Thyroid gland (tissue), 4 donors: ENCODE measurements at regions of chr9 and their contacts with region 1.

Region 1: GRCh38 chr9:93682232-93682968 is 106.0 kb downstream of the PHF2 start:
- DNase-seq: peak; percentile 51 to 58
- H3K4me3 ChIP-seq: no peak overlapping the region
- H3K27ac ChIP-seq: no peak overlapping the region
- H3K4me1 ChIP-seq: no peaks in the 10 kb centered on the region
- H3K27me3 ChIP-seq: no peaks in the 10 kb centered on the region
- CTCF ChIP-seq: peak in 5 of 6 experiments; percentile 65 to 82 (median 67)
- POLR2A ChIP-seq: no peak

Region 2: DNA sequence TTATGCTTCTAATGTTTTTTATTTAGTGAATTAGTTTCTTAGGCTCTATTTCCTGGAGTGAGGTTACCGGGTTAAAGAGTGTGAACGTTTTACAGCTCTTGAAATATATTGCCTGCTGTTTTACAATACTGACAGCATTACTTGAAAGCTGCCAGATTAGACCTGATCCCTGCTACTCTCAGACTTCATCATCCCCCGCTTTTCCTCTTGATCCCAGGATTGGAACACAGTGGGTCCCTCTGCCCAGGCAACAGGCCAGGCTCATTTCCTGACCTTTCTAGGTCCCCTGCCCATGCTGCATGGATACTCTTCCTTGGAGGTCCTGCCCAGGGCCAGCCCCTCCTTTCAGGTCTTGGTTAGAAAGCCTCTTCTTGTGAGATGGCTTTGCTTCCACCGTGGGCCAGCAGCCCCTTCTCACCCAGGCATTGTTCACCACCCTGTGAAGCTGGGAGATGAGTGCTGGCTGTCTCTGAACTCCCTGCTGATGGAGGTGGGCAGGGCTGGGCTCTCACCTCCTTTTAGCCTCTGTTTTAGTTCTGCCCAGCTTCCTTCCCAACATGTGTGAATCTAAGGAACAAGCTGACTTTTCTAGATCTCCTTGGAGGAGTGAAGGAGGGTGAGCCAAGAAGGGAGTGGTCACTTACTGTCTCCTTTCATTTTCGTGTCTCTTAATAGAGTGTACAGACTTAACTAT is 213.5 kb before region 1 on chr9:
- intact Hi-C with region 1: no loop called
- DNase-seq: no peak
- H3K4me3 ChIP-seq: no peak overlapping the region
- H3K27ac ChIP-seq: peak overlapping the region in 2 of 3 donors; percentile 14 to 41
- H3K4me1 ChIP-seq: peaks cover 43 to 66% of the 10 kb centered on the region in 2 donors
- H3K27me3 ChIP-seq: no peaks in the 10 kb centered on the region
- CTCF ChIP-seq: no peak
- POLR2A ChIP-seq: no peak

Region 3: GRCh38 chr9:93531374-93531773 is 151.0 kb before region 1 on chr9:
- intact Hi-C with region 1: no loop called
- DNase-seq: peak; percentile 15 to 23
- H3K4me3 ChIP-seq: no peak overlapping the region
- H3K27ac ChIP-seq: no peak overlapping the region
- H3K4me1 ChIP-seq: no peaks in the 10 kb centered on the region
- H3K27me3 ChIP-seq: no peaks in the 10 kb centered on the region
- CTCF ChIP-seq: peak in 2 of 6 experiments; percentile 19 to 21
- POLR2A ChIP-seq: no peak

Region 4: DNA sequence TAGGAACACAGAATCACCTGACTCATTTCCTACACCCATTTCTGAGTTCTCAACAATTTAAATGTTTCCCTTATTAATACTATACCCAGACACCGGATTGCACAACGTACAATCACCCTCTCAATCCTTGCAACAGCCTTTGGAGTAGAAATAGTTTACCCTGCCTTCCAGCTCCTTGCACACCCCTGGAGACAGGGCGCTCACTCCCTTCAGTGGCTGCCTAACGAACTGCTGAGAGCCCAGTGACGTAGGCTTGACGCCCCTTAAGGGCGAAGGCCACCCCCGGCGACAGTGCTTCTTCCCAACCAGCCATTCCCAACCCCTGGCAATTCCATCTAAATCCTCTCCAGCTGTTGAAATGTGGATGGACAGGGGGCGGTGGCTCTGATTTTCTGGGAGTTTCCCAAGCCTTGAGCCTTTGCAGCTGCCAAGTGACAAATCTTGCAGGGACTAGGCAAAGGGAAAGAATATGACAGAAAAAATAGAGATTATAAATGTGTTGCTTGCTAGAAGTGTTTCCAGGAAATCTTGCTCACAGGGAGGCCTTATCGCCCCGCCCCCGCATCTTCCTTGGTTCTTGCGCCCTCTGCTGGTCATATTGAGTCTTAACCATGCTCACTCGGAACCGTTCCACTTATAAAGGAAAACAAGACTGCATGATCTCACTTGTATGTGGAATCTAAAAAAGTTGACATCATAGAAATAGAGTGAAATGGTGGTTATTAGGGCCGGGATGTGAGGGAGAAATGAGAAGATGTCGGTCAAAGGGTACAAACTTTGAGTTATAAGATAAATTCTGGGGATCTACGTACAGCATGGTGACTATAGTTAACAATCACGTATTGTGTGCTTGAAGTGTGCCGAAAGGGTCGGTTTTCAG is 280.4 kb after region 1 on chr9:
- intact Hi-C with region 1: loop called (anchors 10 kb)
- DNase-seq: peak; percentile 83 to 88
- H3K4me3 ChIP-seq: no peak overlapping the region
- H3K27ac ChIP-seq: no peak overlapping the region
- H3K4me1 ChIP-seq: peaks cover 19 to 30% of the 10 kb centered on the region in 2 donors
- H3K27me3 ChIP-seq: peaks cover 35% of the 10 kb centered on the region
- CTCF ChIP-seq: peak; percentile 66 to 85 (median 82)
- POLR2A ChIP-seq: no peak

Region 5: GRCh38 chr9:94002316-94003140 is 320.1 kb after region 1 on chr9:
- intact Hi-C with region 1: loop called (anchors 10 kb)
- DNase-seq: peak; percentile 40 to 43
- H3K4me3 ChIP-seq: no peak overlapping the region
- H3K27ac ChIP-seq: no peak overlapping the region
- H3K4me1 ChIP-seq: no peaks in the 10 kb centered on the region
- H3K27me3 ChIP-seq: no peaks in the 10 kb centered on the region
- CTCF ChIP-seq: peak; percentile 32 to 72 (median 48)
- POLR2A ChIP-seq: no peak